Heart left ventricle (tissue), 16 donors: ENCODE measurements at regions of chr2 and their contacts with region 1.

Region 1: GRCh38 chr2:239953418-239954061 is 71.6 kb downstream of the NDUFA10 start:
- DNase-seq: peak; percentile 38 to 75 (median 63)
- ATAC-seq: peak; percentile 27 to 76 (median 66)
- H3K4me3 ChIP-seq: peak overlapping the region in 1 of 12 donors; percentile 3
- H3K27ac ChIP-seq: peak overlapping the region in 7 of 12 donors; percentile 29 to 84 (median 69)
- H3K4me1 ChIP-seq: peaks cover 0 to 71% (median 27%) of the 10 kb centered on the region in 12 donors
- H3K27me3 ChIP-seq: no peaks in the 10 kb centered on the region
- CTCF ChIP-seq: peak in 1 of 12 donors; percentile 8
- POLR2A ChIP-seq: no peak

Region 2: GRCh38 chr2:239997686-239998405 is 44.3 kb after region 1 on chr2:
- intact Hi-C with region 1: loop called in 1 of 10 experiments (anchors 1 kb)
- DNase-seq: no peak
- ATAC-seq: peak in 3 of 4 donors; percentile 48 to 65 (median 61)
- H3K4me3 ChIP-seq: no peak overlapping the region
- H3K27ac ChIP-seq: peak overlapping the region in 1 of 12 donors; percentile 3
- H3K4me1 ChIP-seq: peaks cover 0 to 5% (median 0%) of the 10 kb centered on the region in 12 donors
- H3K27me3 ChIP-seq: no peaks in the 10 kb centered on the region
- CTCF ChIP-seq: no peak
- POLR2A ChIP-seq: no peak